Heart left ventricle (tissue), 16 donors: ENCODE measurements at regions of chr9 and their contacts with region 1.

Region 1: DNA sequence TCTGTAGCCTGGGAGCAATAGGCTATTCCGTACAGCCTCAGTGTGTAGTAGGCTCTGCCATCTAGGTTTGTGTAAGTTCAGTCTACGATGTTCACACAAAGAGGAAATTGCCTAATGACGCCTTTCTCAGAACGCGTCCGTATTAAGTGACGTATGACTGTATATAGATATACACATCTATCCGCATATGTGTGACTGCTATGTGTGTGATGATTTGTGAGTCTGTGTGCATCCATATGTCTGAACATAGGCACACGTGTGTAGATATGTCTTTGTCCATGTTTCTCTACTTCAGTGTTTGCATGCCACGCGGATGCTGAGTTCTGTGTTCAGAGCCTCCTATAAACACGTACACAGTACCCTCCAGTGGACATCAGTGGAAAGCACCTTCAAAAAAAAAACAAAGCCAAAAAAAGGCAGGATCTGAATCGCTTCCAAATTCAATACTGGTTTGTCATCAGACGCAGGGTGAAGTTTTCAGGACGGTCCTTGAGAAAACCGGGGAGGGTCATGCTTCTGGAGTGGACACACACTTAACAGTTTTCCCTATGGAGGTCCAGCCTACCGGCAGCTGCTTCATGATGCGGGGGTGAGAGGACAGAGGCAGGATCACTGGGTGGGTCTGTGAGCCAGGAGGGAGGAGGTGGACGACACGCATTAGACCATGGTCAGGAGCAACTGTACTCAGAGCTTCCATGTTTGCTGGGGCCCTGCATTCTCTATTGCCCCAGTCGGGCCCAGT is 29.5 kb upstream of the ALDH1B1 start:
- DNase-seq: peak in 3 of 5 donors; percentile 20 to 44 (median 26)
- ATAC-seq: peak; percentile 73 to 90 (median 81)
- H3K4me3 ChIP-seq: peak overlapping the region in 1 of 12 donors; percentile 32
- H3K27ac ChIP-seq: no peak overlapping the region
- H3K4me1 ChIP-seq: peaks cover 0 to 9% (median 0%) of the 10 kb centered on the region in 12 donors
- H3K27me3 ChIP-seq: no peaks in the 10 kb centered on the region
- CTCF ChIP-seq: peak; percentile 36 to 72 (median 66)
- POLR2A ChIP-seq: no peak

Region 2: GRCh38 chr9:37903647-37904444 is 459.2 kb before region 1 on chr9 and contains the start of gene SLC25A51:
- intact Hi-C with region 1: loop called in 3 of 10 experiments (anchors 5 to 10 kb)
- DNase-seq: peak; percentile 93 to 97 (median 95)
- ATAC-seq: peak; percentile 83 to 94 (median 94)
- H3K4me3 ChIP-seq: peak within 1 kb of the TSS; percentile 71 to 99 (median 93)
- H3K27ac ChIP-seq: peak within 1 kb of the TSS; percentile 43 to 96 (median 88)
- H3K4me1 ChIP-seq: peaks cover 0 to 29% (median 21%) of the 10 kb centered on the region in 12 donors
- H3K27me3 ChIP-seq: no peaks in the 10 kb centered on the region
- CTCF ChIP-seq: peak; percentile 83 to 97 (median 92)
- POLR2A ChIP-seq: peak in 1 of 2 donors; percentile 71
- total RNA-seq, gene SLC25A51: 18.9 to 27.6 (median 22.9) TPM